ENCODE measurements at regions of chr11 and their contacts with region 1.

Region 1: GRCh38 chr11:3841426-3842350 is 929 bp upstream of the RHOG start:
- DNase-seq: peak; percentile 94 to 99 (median 96)
- H3K4me3 ChIP-seq: peak overlapping the region in 1 of 2 donors; percentile 75
- H3K4me3 Mint-ChIP-seq: peak overlapping the region; percentile 86 to 96 (median 88)
- H3K27ac ChIP-seq: peak overlapping the region; percentile 95
- H3K27ac Mint-ChIP-seq: peak overlapping the region; percentile 95 to 99 (median 98)
- H3K4me1 ChIP-seq: peaks cover 34% of the 10 kb centered on the region
- H3K4me1 Mint-ChIP-seq: peaks cover 23 to 57% (median 37%) of the 10 kb centered on the region in 4 donors
- H3K27me3 ChIP-seq: no peaks in the 10 kb centered on the region
- H3K27me3 Mint-ChIP-seq: peaks cover 0 to 3% of the 10 kb centered on the region in 2 donors

Region 2: DNA sequence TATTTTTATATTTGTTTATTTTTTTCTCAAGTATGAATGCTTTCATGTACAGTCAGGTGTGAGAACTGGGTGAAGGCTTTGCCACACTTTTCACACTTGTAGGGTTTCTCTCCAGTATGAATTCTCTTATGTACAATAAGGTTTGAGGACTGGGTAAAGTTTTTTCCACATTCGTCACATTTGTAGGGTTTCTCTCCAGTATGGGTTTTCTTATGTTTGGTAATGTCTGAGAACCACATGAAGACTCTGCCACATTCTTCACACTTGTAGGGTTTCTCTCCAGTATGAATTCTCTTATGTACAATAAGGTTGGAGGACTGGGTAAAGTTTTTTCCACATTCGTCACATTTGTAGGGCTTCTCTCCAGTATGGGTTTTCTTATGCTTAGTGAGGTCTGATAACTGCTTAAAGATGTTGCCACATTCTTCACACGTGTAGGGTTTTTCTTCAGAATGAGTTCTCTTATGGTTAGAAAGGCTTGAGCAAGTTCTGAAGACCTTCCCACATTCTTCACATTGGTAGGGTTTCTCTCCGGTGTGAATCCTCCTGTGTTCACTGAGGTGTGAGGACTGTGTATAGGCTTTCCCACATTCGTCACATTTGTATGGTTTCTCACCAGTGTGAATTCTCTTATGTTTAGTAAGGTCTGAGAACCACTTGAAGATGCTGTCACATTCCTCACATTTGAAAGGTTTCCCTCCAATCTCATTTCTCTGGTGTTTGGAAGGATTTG is 482.4 kb before region 1 on chr11:
- CTCF ChIA-PET with region 1: no interaction called
- POLR2A ChIA-PET with region 1: no interaction called
- intact Hi-C with region 1: no loop called
- DNase-seq: no peak
- H3K4me3 ChIP-seq: peak overlapping the region in 1 of 2 donors; percentile 7
- H3K4me3 Mint-ChIP-seq: no peak overlapping the region
- H3K27ac ChIP-seq: no peak overlapping the region
- H3K27ac Mint-ChIP-seq: no peak overlapping the region
- H3K4me1 ChIP-seq: no peaks in the 10 kb centered on the region
- H3K4me1 Mint-ChIP-seq: peaks cover 0 to 3% (median under 1%) of the 10 kb centered on the region in 4 donors
- H3K27me3 ChIP-seq: no peaks in the 10 kb centered on the region
- H3K27me3 Mint-ChIP-seq: no peaks in the 10 kb centered on the region

Region 3: DNA sequence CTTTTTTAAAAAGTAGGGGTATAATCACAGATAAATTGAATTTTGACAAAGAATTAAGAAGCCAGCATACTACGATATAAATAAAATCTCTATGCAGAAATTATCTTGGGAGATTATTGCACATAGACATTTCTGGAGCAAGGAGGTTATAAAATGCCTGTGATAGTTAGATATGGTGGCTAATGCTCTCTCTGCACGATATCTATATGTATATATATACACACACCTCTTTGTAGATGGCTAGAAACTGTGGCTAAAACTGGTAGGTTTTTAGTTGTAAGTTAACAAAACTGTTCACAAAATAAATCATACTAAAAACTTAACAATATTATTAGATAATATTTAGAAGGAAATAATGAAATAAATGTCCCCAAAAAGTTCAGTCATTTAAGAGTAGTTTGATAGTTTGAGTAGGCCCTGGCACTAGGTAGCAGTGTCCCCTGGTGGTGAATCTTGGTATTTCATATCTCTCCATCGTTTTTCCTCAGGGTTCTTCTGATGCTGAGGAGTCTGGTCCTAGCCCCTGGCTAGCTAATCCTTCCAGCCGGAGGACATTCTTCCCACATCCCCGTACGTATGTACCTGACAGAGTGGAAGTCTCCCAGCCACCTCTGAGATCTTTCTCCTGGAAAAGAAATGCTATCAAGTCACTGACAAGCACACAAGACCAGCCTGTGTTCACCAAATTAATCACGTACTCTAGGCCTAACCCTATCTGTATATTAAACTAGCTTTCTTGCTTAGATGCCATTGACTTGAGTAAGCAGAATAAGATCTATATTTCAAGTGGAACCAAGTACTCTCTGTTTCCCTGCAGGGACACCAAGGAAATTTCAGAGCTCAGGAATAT is 232.0 kb before region 1 on chr11:
- CTCF ChIA-PET with region 1: no interaction called
- POLR2A ChIA-PET with region 1: no interaction called
- intact Hi-C with region 1: no loop called
- DNase-seq: peak in 4 of 5 donors; percentile 35 to 49 (median 41)
- H3K4me3 ChIP-seq: no peak overlapping the region
- H3K4me3 Mint-ChIP-seq: no peak overlapping the region
- H3K27ac ChIP-seq: no peak overlapping the region
- H3K27ac Mint-ChIP-seq: no peak overlapping the region
- H3K4me1 ChIP-seq: peaks cover 8% of the 10 kb centered on the region
- H3K4me1 Mint-ChIP-seq: peaks cover 7 to 13% (median 9%) of the 10 kb centered on the region in 4 donors
- H3K27me3 ChIP-seq: no peaks in the 10 kb centered on the region
- H3K27me3 Mint-ChIP-seq: no peaks in the 10 kb centered on the region

Region 4: DNA sequence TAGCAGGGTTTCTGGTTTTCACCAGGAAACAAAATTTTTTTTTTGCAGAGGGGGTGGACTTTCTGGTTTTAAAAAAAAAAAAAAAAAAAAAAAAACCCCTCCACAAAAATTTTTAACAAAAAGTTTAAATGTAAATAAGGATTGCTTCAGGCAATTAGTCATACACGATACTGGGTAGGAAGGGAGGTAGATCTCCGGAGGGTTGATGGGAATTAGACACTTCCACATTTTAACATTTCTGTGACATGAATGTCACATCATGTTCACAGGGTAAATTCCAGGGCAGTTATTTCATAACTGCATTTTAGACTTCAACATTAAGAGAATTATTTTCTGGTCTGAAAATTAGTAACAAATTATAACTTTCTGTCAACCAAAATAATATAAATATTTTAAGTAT is 60.3 kb before region 1 on chr11:
- CTCF ChIA-PET with region 1: interaction called, 8 read pairs
- POLR2A ChIA-PET with region 1: interaction called, 15 read pairs
- intact Hi-C with region 1: no loop called
- DNase-seq: no peak
- H3K4me3 ChIP-seq: no peak overlapping the region
- H3K4me3 Mint-ChIP-seq: no peak overlapping the region
- H3K27ac ChIP-seq: no peak overlapping the region
- H3K27ac Mint-ChIP-seq: peak overlapping the region in 4 of 7 donors; percentile 41 to 81 (median 66)
- H3K4me1 ChIP-seq: peaks cover 47% of the 10 kb centered on the region
- H3K4me1 Mint-ChIP-seq: peaks cover 27 to 48% (median 37%) of the 10 kb centered on the region in 4 donors
- H3K27me3 ChIP-seq: no peaks in the 10 kb centered on the region
- H3K27me3 Mint-ChIP-seq: no peaks in the 10 kb centered on the region

Region 5: GRCh38 chr11:3807909-3808860 is 33.5 kb before region 1 on chr11 and contains the start of gene PGAP2:
- CTCF ChIA-PET with region 1: interaction called, 29 read pairs
- POLR2A ChIA-PET with region 1: interaction called, 109 read pairs
- intact Hi-C with region 1: loop called (anchors 1 kb)
- DNase-seq: peak; percentile 42 to 62 (median 48)
- H3K4me3 ChIP-seq: peak within 1 kb of the TSS; percentile 81 to 85
- H3K4me3 Mint-ChIP-seq: peak within 1 kb of the TSS; percentile 92 to 99 (median 97)
- H3K27ac ChIP-seq: peak within 1 kb of the TSS; percentile 68
- H3K27ac Mint-ChIP-seq: peak within 1 kb of the TSS; percentile 82 to 99 (median 95)
- H3K4me1 ChIP-seq: peaks cover 10% of the 10 kb centered on the region
- H3K4me1 Mint-ChIP-seq: peaks cover 6 to 18% (median 14%) of the 10 kb centered on the region in 4 donors
- H3K27me3 ChIP-seq: no peaks in the 10 kb centered on the region
- H3K27me3 Mint-ChIP-seq: no peaks in the 10 kb centered on the region
- total RNA-seq, gene PGAP2: 18.4 to 20.7 TPM

Region 6: GRCh38 chr11:3824714-3825472 is 16.8 kb before region 1 on chr11:
- CTCF ChIA-PET with region 1: interaction called, 151 read pairs
- POLR2A ChIA-PET with region 1: interaction called, 221 read pairs
- intact Hi-C with region 1: loop called (anchors 1 kb)
- DNase-seq: peak; percentile 75 to 85 (median 78)
- H3K4me3 ChIP-seq: no peak overlapping the region
- H3K4me3 Mint-ChIP-seq: peak overlapping the region in 4 of 8 donors; percentile 13 to 50 (median 34)
- H3K27ac ChIP-seq: peak overlapping the region; percentile 22
- H3K27ac Mint-ChIP-seq: peak overlapping the region; percentile 79 to 94 (median 89)
- H3K4me1 ChIP-seq: peaks cover 20% of the 10 kb centered on the region
- H3K4me1 Mint-ChIP-seq: peaks cover 20 to 47% (median 32%) of the 10 kb centered on the region in 4 donors
- H3K27me3 ChIP-seq: no peaks in the 10 kb centered on the region
- H3K27me3 Mint-ChIP-seq: no peaks in the 10 kb centered on the region

Region 7: DNA sequence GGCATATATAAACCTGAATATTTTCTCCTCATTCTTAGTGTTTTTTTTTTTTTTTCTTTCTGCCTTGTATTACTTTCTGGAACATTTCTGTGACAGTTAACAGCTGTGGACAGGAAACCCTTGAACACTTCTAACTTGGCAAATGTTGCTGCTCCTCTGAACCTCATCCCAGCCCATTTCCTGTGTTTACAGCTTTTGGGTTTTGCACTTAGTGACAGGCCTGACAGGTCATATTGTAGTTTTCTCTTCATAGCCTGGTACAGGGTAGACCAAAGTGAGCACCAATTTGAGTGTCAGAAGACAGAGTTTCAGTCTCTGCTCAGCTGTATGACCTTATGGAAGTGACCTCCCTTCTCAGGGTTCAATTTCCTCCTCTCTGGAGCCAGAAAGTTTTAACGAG is 105.4 kb after region 1 on chr11:
- CTCF ChIA-PET with region 1: interaction called, 12 read pairs
- POLR2A ChIA-PET with region 1: interaction called, 51 read pairs
- intact Hi-C with region 1: no loop called
- DNase-seq: peak; percentile 72 to 81 (median 77)
- H3K4me3 ChIP-seq: peak overlapping the region; percentile 19 to 45
- H3K4me3 Mint-ChIP-seq: peak overlapping the region; percentile 72 to 86 (median 80)
- H3K27ac ChIP-seq: peak overlapping the region; percentile 68
- H3K27ac Mint-ChIP-seq: peak overlapping the region; percentile 89 to 98 (median 94)
- H3K4me1 ChIP-seq: peaks cover 99% of the 10 kb centered on the region
- H3K4me1 Mint-ChIP-seq: peaks cover 87 to 97% (median 92%) of the 10 kb centered on the region in 4 donors
- H3K27me3 ChIP-seq: no peaks in the 10 kb centered on the region
- H3K27me3 Mint-ChIP-seq: no peaks in the 10 kb centered on the region

Region 8: DNA sequence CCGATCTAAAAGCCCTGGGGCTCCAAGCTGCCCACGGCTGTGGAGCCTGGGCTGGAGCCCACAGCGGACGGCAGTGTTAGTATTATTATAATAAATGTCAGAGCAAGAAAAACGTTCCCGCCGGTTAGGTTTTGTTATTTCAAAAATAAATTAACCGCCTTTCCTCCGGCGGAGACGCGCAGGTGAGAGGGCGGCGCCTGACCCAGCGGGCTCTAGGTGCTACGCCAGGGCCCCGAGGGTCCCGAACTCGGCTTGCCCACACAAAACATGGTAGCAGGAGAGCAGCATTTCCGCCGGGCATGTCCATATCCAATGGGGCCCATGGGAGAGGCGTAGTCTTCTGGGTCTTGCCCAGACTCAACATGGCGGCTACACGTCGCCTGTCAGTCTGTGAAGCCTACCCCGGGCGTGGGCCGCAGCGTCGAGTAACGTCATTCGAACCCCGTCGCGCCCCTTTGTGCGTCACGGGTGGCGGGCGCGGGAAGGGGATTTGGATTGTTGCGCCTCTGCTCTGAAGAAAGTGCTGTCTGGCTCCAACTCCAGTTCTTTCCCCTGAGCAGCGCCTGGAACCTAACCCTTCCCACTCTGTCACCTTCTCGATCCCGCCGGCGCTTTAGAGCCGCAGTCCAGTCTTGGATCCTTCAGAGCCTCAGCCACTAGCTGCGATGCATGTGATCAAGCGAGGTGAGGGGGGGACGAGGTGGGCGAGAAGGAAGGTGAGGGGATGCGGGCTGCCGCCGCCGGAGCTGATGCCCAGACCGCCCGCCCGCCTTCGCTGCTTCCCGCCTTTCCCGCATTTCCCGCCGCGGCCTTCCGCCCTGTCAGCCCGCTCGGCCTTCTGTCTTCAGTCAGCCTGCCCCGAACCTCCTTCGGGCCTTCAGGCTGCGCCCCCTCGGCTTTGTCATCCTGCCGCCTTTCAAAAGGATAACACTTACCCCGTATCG is 252.9 kb after region 1 on chr11 and contains the start of gene RRM1:
- CTCF ChIA-PET with region 1: interaction called, 3 read pairs
- POLR2A ChIA-PET with region 1: interaction called, 8 read pairs
- intact Hi-C with region 1: loop called (anchors 5 kb)
- DNase-seq: peak; percentile 93 to 95 (median 94)
- H3K4me3 ChIP-seq: peak within 1 kb of the TSS; percentile 84 to 91
- H3K4me3 Mint-ChIP-seq: peak within 1 kb of the TSS; percentile 89 to 99 (median 98)
- H3K27ac ChIP-seq: peak within 1 kb of the TSS; percentile 90
- H3K27ac Mint-ChIP-seq: peak within 1 kb of the TSS; percentile 94 to 100 (median 99)
- H3K4me1 ChIP-seq: peaks cover 85% of the 10 kb centered on the region
- H3K4me1 Mint-ChIP-seq: peaks cover 60 to 90% (median 72%) of the 10 kb centered on the region in 4 donors
- H3K27me3 ChIP-seq: no peaks in the 10 kb centered on the region
- H3K27me3 Mint-ChIP-seq: no peaks in the 10 kb centered on the region
- total RNA-seq, gene RRM1: 38.0 to 40.6 TPM

Region 9: GRCh38 chr11:5137014-5137413 is 1295.3 kb after region 1 on chr11:
- CTCF ChIA-PET with region 1: no interaction called
- POLR2A ChIA-PET with region 1: no interaction called
- intact Hi-C with region 1: no loop called
- DNase-seq: no peak
- H3K4me3 ChIP-seq: no peak overlapping the region
- H3K4me3 Mint-ChIP-seq: no peak overlapping the region
- H3K27ac ChIP-seq: no peak overlapping the region
- H3K27ac Mint-ChIP-seq: no peak overlapping the region
- H3K4me1 ChIP-seq: no peaks in the 10 kb centered on the region
- H3K4me1 Mint-ChIP-seq: no peaks in the 10 kb centered on the region
- H3K27me3 ChIP-seq: no peaks in the 10 kb centered on the region
- H3K27me3 Mint-ChIP-seq: peaks cover 0 to 2% of the 10 kb centered on the region in 2 donors

Measured in CD4-positive, alpha-beta memory T cell (primary cell).